Naive thymus-derived CD4-positive, alpha-beta T cell (primary cell): ENCODE measurements at regions of chr13 and their contacts with region 1.

Region 1: GRCh38 chr13:19863323-19864023 is at the start of gene ZMYM5:
- DNase-seq: peak; percentile 87 to 96 (median 90)
- ATAC-seq: peak; percentile 89
- H3K4me3 ChIP-seq: peak within 1 kb of the TSS; percentile 80
- H3K4me3 Mint-ChIP-seq: peak within 1 kb of the TSS; percentile 85 to 98 (median 97)
- H3K27ac ChIP-seq: peak within 1 kb of the TSS; percentile 84
- H3K27ac Mint-ChIP-seq: peak within 1 kb of the TSS; percentile 90 to 98 (median 97)
- H3K4me1 ChIP-seq: peaks cover 22 to 23% of the 10 kb centered on the region in 2 donors
- H3K4me1 Mint-ChIP-seq: peaks cover 12 to 43% (median 37%) of the 10 kb centered on the region in 7 donors
- H3K27me3 ChIP-seq: no peaks in the 10 kb centered on the region
- H3K27me3 Mint-ChIP-seq: no peaks in the 10 kb centered on the region
- total RNA-seq, gene ZMYM5: 17.5 to 25.6 (median 24.7) TPM

Region 2: DNA sequence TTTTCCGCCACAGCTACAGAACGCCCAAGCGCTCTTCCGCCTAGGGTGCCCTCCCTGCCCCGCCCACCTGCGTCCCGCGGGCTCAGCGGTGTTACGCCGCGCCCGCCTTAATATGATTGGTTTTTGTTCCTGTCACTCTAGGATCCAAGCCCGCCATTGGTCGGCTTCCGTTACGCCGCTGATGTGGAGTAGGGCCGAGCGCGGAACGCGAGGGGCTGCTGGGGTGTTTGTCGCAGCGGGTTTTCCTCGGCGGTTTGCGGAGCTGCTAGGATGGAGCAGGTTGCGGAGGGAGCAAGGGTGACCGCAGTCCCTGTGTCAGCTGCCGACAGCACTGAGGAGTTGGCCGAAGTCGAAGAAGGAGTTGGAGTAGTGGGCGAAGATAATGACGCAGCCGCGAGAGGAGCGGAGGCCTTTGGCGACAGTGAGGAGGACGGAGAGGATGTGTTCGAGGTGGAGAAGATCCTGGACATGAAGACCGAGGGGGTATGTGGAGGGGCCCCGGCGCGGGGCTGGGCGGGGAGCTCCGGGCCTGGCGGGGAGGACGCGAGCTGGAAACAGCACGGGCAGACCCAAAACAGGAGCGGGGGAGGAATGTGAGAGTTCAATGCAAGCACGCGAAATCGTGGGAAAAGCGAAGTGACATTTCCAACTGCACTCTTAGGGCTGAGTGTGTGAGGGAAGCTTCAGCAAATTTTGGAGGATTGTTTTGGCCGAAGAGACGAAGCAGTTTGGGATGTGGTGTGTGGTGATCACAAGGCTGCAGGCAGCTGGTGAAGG is 229.8 kb before region 1 on chr13 and contains the start of gene MPHOSPH8:
- CTCF ChIA-PET with region 1: interaction called, 3 read pairs
- POLR2A ChIA-PET with region 1: interaction called, 33 read pairs
- intact Hi-C with region 1: loop called (anchors 1 kb)
- DNase-seq: peak; percentile 82 to 94 (median 92)
- ATAC-seq: peak; percentile 99
- H3K4me3 ChIP-seq: peak within 1 kb of the TSS; percentile 83
- H3K4me3 Mint-ChIP-seq: peak within 1 kb of the TSS; percentile 96 to 100 (median 100)
- H3K27ac ChIP-seq: peak within 1 kb of the TSS; percentile 91
- H3K27ac Mint-ChIP-seq: peak within 1 kb of the TSS; percentile 98 to 100 (median 99)
- H3K4me1 ChIP-seq: peaks cover 20 to 28% of the 10 kb centered on the region in 2 donors
- H3K4me1 Mint-ChIP-seq: peaks cover 29 to 42% (median 34%) of the 10 kb centered on the region in 7 donors
- H3K27me3 ChIP-seq: no peaks in the 10 kb centered on the region
- H3K27me3 Mint-ChIP-seq: peaks cover 0 to 3% (median 0%) of the 10 kb centered on the region in 5 donors
- total RNA-seq, gene MPHOSPH8: 50.6 to 131 (median 65.6) TPM

Region 3: GRCh38 chr13:19782049-19782726 is 81.3 kb before region 1 on chr13:
- CTCF ChIA-PET with region 1: interaction called, 3 read pairs
- POLR2A ChIA-PET with region 1: interaction called, 48 read pairs
- intact Hi-C with region 1: loop called (anchors 1 kb)
- DNase-seq: peak; percentile 26 to 61 (median 49)
- ATAC-seq: peak; percentile 63
- H3K4me3 ChIP-seq: peak overlapping the region; percentile 99
- H3K4me3 Mint-ChIP-seq: peak overlapping the region; percentile 96 to 100 (median 98)
- H3K27ac ChIP-seq: peak overlapping the region; percentile 98
- H3K27ac Mint-ChIP-seq: peak overlapping the region; percentile 96 to 100 (median 99)
- H3K4me1 ChIP-seq: peaks cover 0 to 8% of the 10 kb centered on the region in 2 donors
- H3K4me1 Mint-ChIP-seq: peaks cover 0 to 13% (median 10%) of the 10 kb centered on the region in 7 donors
- H3K27me3 ChIP-seq: no peaks in the 10 kb centered on the region
- H3K27me3 Mint-ChIP-seq: peaks cover 0 to 5% (median 0%) of the 10 kb centered on the region in 5 donors

Region 4: GRCh38 chr13:19845758-19846157 is 17.7 kb before region 1 on chr13:
- CTCF ChIA-PET with region 1: interaction called, 3 read pairs
- POLR2A ChIA-PET with region 1: interaction called, 6 read pairs
- intact Hi-C with region 1: loop called (anchors 2 kb)
- DNase-seq: no peak
- ATAC-seq: peak; percentile 12
- H3K4me3 ChIP-seq: no peak overlapping the region
- H3K4me3 Mint-ChIP-seq: no peak overlapping the region
- H3K27ac ChIP-seq: no peak overlapping the region
- H3K27ac Mint-ChIP-seq: peak overlapping the region in 3 of 9 donors; percentile 34 to 51 (median 45)
- H3K4me1 ChIP-seq: no peaks in the 10 kb centered on the region
- H3K4me1 Mint-ChIP-seq: peaks cover 0 to 21% (median 14%) of the 10 kb centered on the region in 7 donors
- H3K27me3 ChIP-seq: no peaks in the 10 kb centered on the region
- H3K27me3 Mint-ChIP-seq: no peaks in the 10 kb centered on the region

Region 5: GRCh38 chr13:20118268-20119140 is 255.0 kb after region 1 on chr13:
- CTCF ChIA-PET with region 1: no interaction called
- POLR2A ChIA-PET with region 1: no interaction called
- intact Hi-C with region 1: loop called in 1 of 2 experiments (anchors 1 kb)
- DNase-seq: peak in 7 of 9 donors; percentile 8 to 45 (median 27)
- ATAC-seq: peak; percentile 54
- H3K4me3 ChIP-seq: peak overlapping the region; percentile 71
- H3K4me3 Mint-ChIP-seq: peak overlapping the region; percentile 83 to 96 (median 93)
- H3K27ac ChIP-seq: peak overlapping the region; percentile 67
- H3K27ac Mint-ChIP-seq: peak overlapping the region; percentile 53 to 97 (median 93)
- H3K4me1 ChIP-seq: peaks cover 0 to 9% of the 10 kb centered on the region in 2 donors
- H3K4me1 Mint-ChIP-seq: peaks cover 9 to 25% (median 20%) of the 10 kb centered on the region in 7 donors
- H3K27me3 ChIP-seq: no peaks in the 10 kb centered on the region
- H3K27me3 Mint-ChIP-seq: peaks cover 0 to 20% (median 0%) of the 10 kb centered on the region in 5 donors

Region 6: DNA sequence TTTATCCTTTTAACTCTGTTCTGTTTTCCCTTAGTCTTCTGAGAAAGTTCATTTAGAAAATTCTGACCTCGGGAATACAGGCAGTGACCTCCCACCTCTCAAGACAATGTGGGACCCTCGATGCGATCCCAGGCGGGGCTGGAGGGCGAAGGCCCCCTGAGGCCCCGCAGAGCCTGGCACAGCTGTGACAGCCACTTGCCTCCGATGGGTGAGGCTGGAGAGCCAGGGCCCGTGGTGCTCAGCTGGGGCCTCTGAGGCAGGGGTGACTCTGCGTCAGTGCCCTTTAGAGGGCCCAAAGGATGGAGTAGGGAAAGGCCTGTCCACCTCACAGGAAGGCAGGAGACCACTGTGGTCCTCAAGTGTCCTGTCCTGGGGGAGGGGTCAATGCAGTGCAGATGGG is 287.1 kb after region 1 on chr13:
- CTCF ChIA-PET with region 1: no interaction called
- POLR2A ChIA-PET with region 1: no interaction called
- intact Hi-C with region 1: no loop called
- DNase-seq: no peak
- ATAC-seq: no peak
- H3K4me3 ChIP-seq: no peak overlapping the region
- H3K4me3 Mint-ChIP-seq: no peak overlapping the region
- H3K27ac ChIP-seq: no peak overlapping the region
- H3K27ac Mint-ChIP-seq: no peak overlapping the region
- H3K4me1 ChIP-seq: no peaks in the 10 kb centered on the region
- H3K4me1 Mint-ChIP-seq: no peaks in the 10 kb centered on the region
- H3K27me3 ChIP-seq: no peaks in the 10 kb centered on the region
- H3K27me3 Mint-ChIP-seq: peaks cover 24 to 59% (median 27%) of the 10 kb centered on the region in 5 donors

Region 7: DNA sequence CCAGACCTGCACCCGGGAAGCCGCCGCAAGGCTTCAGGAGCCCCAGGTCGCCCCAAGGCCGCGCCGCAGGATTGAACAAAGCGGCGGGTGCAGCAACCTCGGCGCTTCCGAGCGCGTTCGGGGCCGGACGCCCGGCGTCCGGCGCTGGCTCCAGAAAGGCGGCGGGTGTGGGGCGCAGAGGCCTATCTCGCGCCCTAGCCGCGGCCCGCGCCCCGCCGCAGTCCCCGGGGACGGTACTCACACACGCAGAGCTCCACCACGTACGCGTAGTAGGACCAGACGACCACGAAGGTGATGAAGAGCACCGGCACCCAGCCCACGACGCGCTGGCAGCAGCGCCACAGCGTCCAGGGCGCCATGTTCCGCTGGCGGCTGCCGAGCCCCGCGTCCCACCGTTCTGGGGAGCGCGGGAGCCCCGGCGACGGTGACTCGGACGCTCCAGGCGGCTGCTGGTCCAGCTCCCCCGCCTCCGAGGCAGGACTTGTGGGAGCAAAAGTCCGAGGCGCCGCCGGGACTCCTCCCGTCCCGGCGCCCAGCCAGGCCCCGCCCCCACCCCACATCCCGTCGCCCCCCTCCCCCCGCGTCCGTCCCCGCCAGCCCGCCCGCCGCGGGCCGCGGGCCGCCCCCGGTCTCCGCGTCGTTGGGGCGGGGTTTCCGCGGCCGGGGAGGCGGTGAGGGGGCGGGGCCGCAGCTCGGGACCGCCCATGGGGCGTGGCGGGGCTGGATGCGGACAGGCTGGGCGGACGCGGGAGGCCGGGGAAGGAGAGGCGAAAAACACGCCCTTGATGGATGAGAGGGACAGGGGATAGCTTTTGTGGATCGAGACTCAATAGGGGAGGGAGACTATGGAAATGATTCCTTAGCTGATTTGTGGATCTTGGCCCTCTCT is 1595.6 kb after region 1 on chr13 and contains the start of gene ZDHHC20:
- CTCF ChIA-PET with region 1: no interaction called
- POLR2A ChIA-PET with region 1: no interaction called
- intact Hi-C with region 1: loop called in 1 of 2 experiments (anchors 1 kb)
- DNase-seq: peak; percentile 75 to 99 (median 88)
- ATAC-seq: peak; percentile 98
- H3K4me3 ChIP-seq: peak within 1 kb of the TSS; percentile 90
- H3K4me3 Mint-ChIP-seq: peak within 1 kb of the TSS; percentile 91 to 97 (median 94)
- H3K27ac ChIP-seq: peak within 1 kb of the TSS; percentile 97
- H3K27ac Mint-ChIP-seq: peak within 1 kb of the TSS; percentile 74 to 98 (median 94)
- H3K4me1 ChIP-seq: peaks cover 9 to 19% of the 10 kb centered on the region in 2 donors
- H3K4me1 Mint-ChIP-seq: peaks cover 27 to 55% (median 42%) of the 10 kb centered on the region in 7 donors
- H3K27me3 ChIP-seq: no peaks in the 10 kb centered on the region
- H3K27me3 Mint-ChIP-seq: peaks cover 0 to 7% (median 0%) of the 10 kb centered on the region in 5 donors
- total RNA-seq, gene ZDHHC20: 60.8 to 89.9 (median 71.7) TPM